H1 (cell line): ENCODE measurements at regions of chr6 and their contacts with region 1.

Region 1: DNA sequence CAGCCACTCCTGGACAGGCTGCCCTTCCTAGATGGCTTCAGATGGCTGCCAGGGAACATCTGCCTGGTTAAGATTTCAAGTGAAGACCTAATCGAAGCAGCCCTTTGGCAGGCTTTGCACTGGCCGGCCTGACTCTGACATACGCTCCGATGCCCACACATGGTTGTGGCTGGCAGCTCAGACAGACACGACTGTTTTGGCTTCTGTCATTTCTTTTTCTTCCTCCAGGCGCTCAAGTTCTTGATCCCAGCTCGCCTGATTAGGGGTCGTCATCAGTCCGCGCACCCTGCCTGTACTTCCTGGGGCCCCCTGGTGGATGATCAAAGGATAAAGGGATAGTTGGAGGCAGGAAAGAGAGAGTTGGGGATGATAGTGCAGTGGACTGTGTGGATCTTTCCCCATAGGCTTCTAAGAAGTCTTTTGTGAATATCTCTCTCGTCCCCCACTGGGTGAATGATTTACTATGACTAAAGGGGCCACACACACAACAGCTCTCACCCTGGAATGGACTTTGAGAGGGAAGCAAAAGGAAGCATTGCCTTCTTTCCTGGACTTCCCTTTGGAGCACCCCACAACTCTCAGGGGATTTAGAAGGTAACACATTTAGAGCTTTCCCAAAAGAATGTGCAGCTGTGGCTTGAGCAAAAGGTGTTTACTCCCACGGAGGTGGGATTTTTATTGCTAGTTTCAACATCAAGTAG is 21.4 kb upstream of the TRAM2 start:
- DNase-seq: peak; percentile 58 to 87
- H3K4me3 ChIP-seq: peak overlapping the region in 1 of 4 experiments; percentile 13; a peak in 1 of 8 replicates
- H3K27ac ChIP-seq: no peak overlapping the region
- H3K4me1 ChIP-seq: peaks cover 0 to 4% (median 2%) of the 10 kb centered on the region in 4 experiments; a peak in 5 of 7 replicates
- H3K27me3 ChIP-seq: no peaks in the 10 kb centered on the region; a peak in 1 of 7 replicates
- CTCF ChIP-seq: peak; percentile 70 to 98 (median 84)
- EP300 ChIP-seq: peak in 1 of 2 experiments; percentile 44; a peak in 1 of 3 replicates
- POLR2A ChIP-seq: peak in 1 of 2 experiments; percentile 54; a peak in 1 of 3 replicates
- RAD21 ChIP-seq: peak; percentile 66 to 76

Region 2: DNA sequence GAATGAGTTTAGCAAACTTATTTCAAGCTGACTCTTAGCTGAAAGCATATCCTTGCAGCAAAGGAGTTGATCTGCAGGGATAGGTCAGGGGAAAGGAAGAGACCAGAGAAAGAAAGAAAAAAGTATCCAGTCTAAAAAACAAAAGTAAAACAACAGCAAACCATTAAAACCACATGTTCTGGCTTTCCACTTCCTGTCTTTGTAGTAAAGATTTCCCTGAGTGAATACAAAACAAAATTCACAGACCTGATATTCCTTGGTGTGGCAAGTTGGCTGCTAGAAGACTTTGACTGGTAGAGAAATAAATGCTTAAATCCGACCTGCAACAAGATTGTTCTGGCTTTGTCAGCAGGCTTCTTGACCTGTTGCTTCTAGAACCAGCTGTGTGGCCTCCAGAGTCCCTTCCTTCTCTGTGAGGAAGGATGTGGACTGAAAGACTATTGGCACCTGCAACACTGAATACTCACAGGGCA is 290.3 kb before region 1 on chr6:
- CTCF ChIA-PET with region 1: no interaction called
- POLR2A ChIA-PET with region 1: no interaction called
- DNase-seq: no peak
- H3K4me3 ChIP-seq: no peak overlapping the region
- H3K27ac ChIP-seq: no peak overlapping the region
- H3K4me1 ChIP-seq: no peaks in the 10 kb centered on the region; a peak in 2 of 7 replicates
- H3K27me3 ChIP-seq: no peaks in the 10 kb centered on the region
- CTCF ChIP-seq: no peak
- EP300 ChIP-seq: no peak
- POLR2A ChIP-seq: no peak
- RAD21 ChIP-seq: no peak

Region 3: GRCh38 chr6:52419809-52420670 is 178.2 kb before region 1 on chr6 and contains the start of gene EFHC1:
- CTCF ChIA-PET with region 1: interaction called, 24 read pairs
- POLR2A ChIA-PET with region 1: no interaction called
- DNase-seq: peak; percentile 96 to 99
- H3K4me3 ChIP-seq: peak within 1 kb of the TSS; percentile 77 to 90 (median 88)
- H3K27ac ChIP-seq: peak within 1 kb of the TSS; percentile 78
- H3K4me1 ChIP-seq: peaks cover 0 to 4% (median 0%) of the 10 kb centered on the region in 4 experiments; a peak in 1 of 7 replicates
- H3K27me3 ChIP-seq: no peaks in the 10 kb centered on the region
- CTCF ChIP-seq: no peak
- EP300 ChIP-seq: no peak
- POLR2A ChIP-seq: peak; percentile 73 to 92
- RAD21 ChIP-seq: no peak
- total RNA-seq, gene EFHC1: 14.7 and 16.4 TPM in 2 replicates

Region 4: DNA sequence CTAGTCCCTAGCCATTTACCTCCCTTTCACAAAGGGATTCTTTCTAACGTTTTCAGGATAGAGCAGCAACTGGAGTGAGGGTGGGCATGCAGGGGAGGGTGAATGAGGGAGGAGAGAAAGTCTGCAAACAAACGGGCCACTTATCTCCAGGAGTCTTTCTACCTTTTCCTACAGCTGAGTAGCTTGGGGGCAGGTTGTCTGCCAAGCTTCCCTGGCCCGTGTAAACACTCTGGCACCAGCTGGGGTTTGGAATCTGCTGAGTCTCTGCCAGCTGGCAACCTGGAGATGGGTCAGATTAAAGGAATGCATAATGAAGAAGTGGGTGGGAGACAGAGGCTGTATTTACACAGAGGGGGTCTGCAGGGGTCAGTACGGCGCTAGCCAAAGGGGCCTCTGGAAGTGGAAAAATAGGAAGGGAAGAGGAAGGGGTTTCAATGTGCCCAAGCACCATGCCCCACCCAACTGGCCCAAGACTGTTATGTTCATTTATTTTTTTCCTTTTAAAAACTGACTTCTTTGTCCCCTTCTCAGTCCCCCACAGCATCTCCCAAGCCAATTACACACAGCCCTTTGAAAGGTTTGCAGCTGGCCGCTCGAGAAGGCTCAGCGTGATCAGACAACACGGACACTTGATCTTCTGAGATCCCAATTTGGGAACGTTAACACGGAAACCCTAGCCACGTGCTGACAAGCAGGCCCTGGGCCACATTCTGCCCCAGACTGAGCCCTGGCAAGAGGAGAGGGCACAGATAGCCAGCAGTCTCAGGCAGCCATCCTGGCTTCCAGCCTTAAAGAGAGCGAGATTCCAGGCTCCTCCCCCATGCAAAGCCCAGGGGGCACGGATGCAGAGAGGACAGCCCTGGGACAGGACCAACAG is 46.6 kb before region 1 on chr6:
- CTCF ChIA-PET with region 1: interaction called, 31 read pairs
- POLR2A ChIA-PET with region 1: interaction called, 3 read pairs
- DNase-seq: peak in 1 of 2 experiments; percentile 70
- H3K4me3 ChIP-seq: peak overlapping the region in 3 of 4 experiments; percentile 10 to 43 (median 23); a peak in 4 of 8 replicates
- H3K27ac ChIP-seq: peak overlapping the region; percentile 40; the same call in 1 of the 2 replicates
- H3K4me1 ChIP-seq: peaks cover 11 to 17% (median 12%) of the 10 kb centered on the region in 4 experiments
- H3K27me3 ChIP-seq: no peaks in the 10 kb centered on the region
- CTCF ChIP-seq: peak in 1 of 3 experiments; percentile 4; a peak in 2 of 4 replicates
- EP300 ChIP-seq: no peak
- POLR2A ChIP-seq: no peak
- RAD21 ChIP-seq: peak; percentile 37 to 47; a peak in 2 of 4 replicates

Region 5: GRCh38 chr6:52584203-52584602 is 14.1 kb before region 1 on chr6:
- CTCF ChIA-PET with region 1: interaction called, 14 read pairs
- POLR2A ChIA-PET with region 1: interaction called, 3 read pairs
- DNase-seq: no peak
- H3K4me3 ChIP-seq: no peak overlapping the region
- H3K27ac ChIP-seq: no peak overlapping the region
- H3K4me1 ChIP-seq: peaks cover 0 to 2% (median 0%) of the 10 kb centered on the region in 4 experiments; a peak in 1 of 7 replicates
- H3K27me3 ChIP-seq: no peaks in the 10 kb centered on the region
- CTCF ChIP-seq: no peak
- EP300 ChIP-seq: no peak
- POLR2A ChIP-seq: no peak
- RAD21 ChIP-seq: no peak

Region 6: DNA sequence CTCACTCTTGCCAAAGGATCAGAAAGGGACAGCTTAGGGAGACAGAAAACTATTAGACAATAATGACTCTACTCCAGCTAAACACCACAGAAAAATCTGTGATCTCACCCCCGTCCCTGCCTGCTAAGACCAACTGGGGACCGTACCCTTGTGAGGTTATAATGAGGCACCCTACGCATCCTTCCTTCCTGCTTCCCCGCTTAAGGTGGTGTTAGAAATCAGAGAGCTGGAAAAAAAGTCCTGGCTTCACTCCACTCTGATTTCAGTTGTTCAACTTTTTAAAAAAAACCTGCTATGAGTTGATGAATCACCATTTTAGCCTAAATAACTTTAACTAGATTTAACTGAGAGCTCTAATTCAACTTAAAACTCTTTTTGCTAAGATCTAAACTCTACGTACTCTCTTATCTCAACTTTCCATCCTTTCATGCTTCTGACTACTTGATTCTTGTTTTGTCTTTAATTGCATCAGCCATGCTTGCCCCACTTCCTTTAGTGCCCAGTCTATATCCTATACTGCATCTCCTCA is 36.8 kb after region 1 on chr6:
- CTCF ChIA-PET with region 1: interaction called, 13 read pairs
- POLR2A ChIA-PET with region 1: no interaction called
- DNase-seq: no peak
- H3K4me3 ChIP-seq: no peak overlapping the region
- H3K27ac ChIP-seq: no peak overlapping the region
- H3K4me1 ChIP-seq: peaks cover 0 to 2% (median under 1%) of the 10 kb centered on the region in 4 experiments; a peak in 1 of 7 replicates
- H3K27me3 ChIP-seq: no peaks in the 10 kb centered on the region
- CTCF ChIP-seq: no peak
- EP300 ChIP-seq: no peak
- POLR2A ChIP-seq: no peak
- RAD21 ChIP-seq: no peak

Region 7: DNA sequence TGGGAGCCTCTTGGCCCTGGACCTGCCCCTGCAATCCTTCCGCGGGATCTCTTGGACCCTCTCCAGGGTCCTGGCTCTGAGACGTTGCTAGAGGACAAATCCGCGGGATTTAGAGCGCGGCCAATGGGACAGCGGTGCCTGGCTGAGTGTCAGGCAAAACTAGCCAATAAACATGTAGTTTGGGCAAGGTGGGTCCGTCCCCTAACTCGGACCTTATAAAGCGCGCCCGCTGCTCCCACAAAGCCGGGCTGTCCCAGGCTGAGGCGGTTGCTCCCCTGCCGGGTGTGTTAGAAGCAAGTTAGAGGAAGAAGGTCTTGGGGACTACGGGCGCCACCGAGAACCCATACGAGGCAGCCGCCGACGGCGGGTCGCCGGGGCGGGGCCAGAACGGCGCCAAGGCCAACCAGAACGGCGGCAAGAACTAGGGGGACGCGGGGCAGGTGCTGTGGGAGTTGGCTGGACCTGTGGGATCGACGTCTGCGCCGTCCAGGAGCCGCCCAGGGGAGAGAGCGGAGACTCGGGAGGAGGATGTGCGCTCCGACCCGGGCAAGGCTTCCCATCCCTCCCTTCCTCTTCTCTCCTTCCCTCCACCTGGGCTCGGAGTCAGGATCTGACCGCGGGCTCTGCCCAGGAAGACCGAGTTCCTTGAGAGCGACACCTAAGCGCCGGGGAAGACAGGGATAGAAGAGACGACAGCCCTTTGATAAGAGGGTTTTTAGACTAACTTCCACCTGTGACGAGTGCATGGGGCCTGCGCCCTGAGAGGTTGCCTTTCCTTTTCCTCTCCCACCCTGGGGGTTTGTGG is 66.1 kb after region 1 on chr6:
- CTCF ChIA-PET with region 1: interaction called, 18 read pairs
- POLR2A ChIA-PET with region 1: no interaction called
- DNase-seq: peak; percentile 93
- H3K4me3 ChIP-seq: peak overlapping the region; percentile 66 to 76 (median 74)
- H3K27ac ChIP-seq: no peak overlapping the region
- H3K4me1 ChIP-seq: peaks cover 0 to 10% (median 5%) of the 10 kb centered on the region in 4 experiments; a peak in 3 of 7 replicates
- H3K27me3 ChIP-seq: peaks cover 0 to 10% (median 7%) of the 10 kb centered on the region in 4 experiments; a peak in 5 of 7 replicates
- CTCF ChIP-seq: no peak
- EP300 ChIP-seq: no peak
- POLR2A ChIP-seq: peak; percentile 90 to 95
- RAD21 ChIP-seq: no peak